ENCODE measurements at regions of chr11 and their contacts with region 1.

Region 1: DNA sequence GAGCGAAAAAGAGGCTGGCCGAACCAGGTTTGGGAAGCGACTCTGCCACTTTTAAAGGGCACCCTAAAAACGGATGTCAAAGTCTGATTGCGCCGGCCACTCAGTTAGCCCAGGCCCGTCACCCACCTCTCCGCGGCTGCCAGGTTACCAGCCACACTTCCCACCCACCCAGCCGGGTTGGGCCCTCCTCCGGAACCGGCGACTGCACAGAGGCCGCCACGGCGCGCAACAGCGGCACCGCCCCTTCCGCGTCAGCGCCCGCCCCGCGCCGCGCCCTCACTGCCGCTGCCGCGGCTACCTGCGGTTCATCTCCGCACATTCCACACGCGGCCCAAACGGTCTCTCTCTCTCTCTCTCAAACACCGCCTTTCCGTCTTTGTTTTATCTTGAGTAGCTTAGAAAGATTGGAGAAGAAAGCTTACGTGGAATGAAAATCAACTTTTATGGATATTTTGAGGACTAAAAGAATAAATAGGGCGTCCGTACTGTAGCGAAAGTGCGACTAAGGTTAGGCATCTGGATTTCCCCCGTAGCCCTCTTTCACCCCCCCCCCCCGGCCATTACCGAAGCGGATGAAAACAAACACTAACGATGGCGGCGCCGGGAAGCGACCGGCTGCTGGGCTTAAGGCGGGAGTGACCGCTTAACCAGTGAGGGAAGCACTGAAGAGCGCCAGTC is at the starts of genes ATG13 and HARBI1:
- DNase-seq: peak; percentile 95
- H3K4me3 Mint-ChIP-seq: peak within 1 kb of the TSS; percentile 91
- H3K27ac Mint-ChIP-seq: peak within 1 kb of the TSS; percentile 98
- H3K4me1 Mint-ChIP-seq: peaks cover 38% of the 10 kb centered on the region
- H3K27me3 Mint-ChIP-seq: no peaks in the 10 kb centered on the region

Region 2: GRCh38 chr11:46389450-46390253 is 227.5 kb before region 1 on chr11:
- CTCF ChIA-PET with region 1: interaction called, 12 read pairs
- DNase-seq: peak; percentile 70
- H3K4me3 Mint-ChIP-seq: peak overlapping the region; percentile 31
- H3K27ac Mint-ChIP-seq: no peak overlapping the region
- H3K4me1 Mint-ChIP-seq: peaks cover 46% of the 10 kb centered on the region
- H3K27me3 Mint-ChIP-seq: peaks cover 97% of the 10 kb centered on the region

Measured in activated naive CD4-positive, alpha-beta T cell treated with anti-CD3 and anti-CD28 coated beads, Interleukin-2, amount 10 ng/mL, durations not matched to agents 7 days and 5 days (primary cell).